Head of caudate nucleus (tissue), 42 donors: ENCODE measurements at regions of chr10 and their contacts with region 1.

Region 1: DNA sequence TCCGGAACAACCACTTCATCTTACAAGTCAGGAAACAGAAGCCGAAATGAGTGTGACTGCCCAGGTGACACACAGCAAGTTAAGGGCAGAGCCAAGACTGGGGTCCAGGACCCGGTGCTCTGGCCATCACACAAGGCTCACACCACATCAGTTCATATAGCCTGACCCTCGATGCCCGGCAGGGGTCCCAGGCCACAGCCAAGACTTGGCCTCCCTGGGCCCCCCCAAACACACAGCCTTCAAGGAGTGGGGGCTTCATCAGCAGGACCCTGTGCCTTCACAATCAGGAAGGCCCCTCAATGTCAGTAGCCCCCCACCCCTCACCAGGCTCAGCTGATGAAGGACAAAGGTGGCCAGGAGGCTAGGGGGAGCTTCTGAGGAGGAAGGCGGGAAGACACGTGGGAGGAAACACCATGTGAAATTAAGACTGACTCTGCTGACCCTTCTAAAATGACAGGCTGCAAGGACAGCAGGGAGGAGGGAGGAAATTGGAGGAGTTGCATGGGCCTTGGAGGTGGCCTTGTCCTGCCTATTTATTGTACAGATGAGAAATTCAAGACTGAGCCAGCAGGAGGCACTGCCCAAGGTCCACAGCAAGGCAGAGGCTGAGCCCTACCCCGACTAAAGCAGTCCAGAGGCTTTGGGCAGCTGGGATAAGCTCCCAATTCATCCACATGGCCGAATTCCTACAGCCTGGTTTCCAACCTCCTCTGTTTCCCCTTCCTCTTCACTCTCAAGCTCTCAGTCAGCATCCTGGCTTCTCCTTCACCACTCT is 216.1 kb upstream of the ZMIZ1 start:
- DNase-seq: no peak

Region 2: DNA sequence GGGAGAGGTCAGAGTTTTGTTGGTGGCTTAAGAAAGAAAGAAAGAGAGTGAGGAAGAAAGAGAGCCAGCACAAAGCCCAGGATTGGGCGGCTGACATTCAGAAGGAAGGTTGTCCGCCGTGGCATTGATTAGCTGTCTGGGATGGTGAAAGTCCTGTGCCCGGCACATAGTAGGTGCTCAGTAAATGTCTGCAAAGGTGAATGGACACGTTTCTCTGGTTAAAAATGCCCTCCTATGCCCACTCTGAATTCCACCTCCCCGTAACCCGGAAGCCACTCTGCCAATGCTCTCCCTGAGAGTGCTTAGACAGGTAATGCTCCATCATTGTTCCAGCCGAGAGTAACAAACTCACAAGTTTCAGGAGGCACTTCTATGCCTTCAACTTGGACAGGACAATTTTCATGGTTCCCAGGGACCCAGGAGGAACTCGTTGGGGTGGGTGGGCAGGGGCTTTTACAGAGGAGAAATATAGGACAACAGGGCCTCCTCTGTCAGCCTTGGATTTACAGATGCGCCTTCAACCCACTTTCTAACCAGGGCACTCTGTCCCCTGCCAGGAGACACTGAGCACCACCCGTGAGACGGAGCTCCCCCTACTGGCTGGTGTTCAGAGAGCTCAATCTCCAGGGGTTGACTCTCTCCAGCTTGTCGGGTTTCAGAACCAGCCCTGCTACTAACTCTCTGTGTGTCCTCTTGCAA is 195.3 kb before region 1 on chr10:
- intact Hi-C with region 1: no loop called
- DNase-seq: peak; percentile 33 to 91 (median 77)

Region 3: GRCh38 chr10:78784546-78784945 is 68.1 kb before region 1 on chr10:
- intact Hi-C with region 1: no loop called
- DNase-seq: peak in 2 of 42 donors; percentile 7 to 18

Region 4: GRCh38 chr10:78913219-78914059 is 60.8 kb after region 1 on chr10:
- intact Hi-C with region 1: loop called (anchors 2 kb)
- DNase-seq: peak; percentile 92 to 99 (median 96)

Region 5: DNA sequence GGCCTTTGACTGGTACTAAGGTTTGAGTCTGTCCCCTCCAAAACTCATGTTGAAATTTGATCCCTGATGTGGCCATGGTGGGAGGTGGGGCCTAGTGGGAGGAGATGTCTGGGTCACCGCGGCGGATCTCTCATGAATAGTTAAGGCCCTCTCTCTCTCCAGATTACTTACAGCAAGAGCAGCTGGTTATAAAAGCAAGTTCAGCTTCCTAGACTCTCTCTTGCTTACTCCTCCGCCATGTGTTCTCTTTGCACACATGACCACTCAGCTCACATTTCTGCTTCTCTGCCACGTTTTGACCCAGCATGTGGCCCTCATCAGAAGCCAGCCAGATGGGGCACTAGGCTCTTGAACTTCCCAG is 186.2 kb after region 1 on chr10:
- intact Hi-C with region 1: no loop called
- DNase-seq: peak in 6 of 42 donors; percentile 2 to 19 (median 2)